Sciatic nerve (tissue), 2 donors: ENCODE measurements at regions of chr5 and their contacts with region 1.

Region 1: GRCh38 chr5:87069974-87070624 is 197.6 kb upstream of the RASA1 start:
- DNase-seq: no peak
- ATAC-seq: peak; percentile 44

Region 2: DNA sequence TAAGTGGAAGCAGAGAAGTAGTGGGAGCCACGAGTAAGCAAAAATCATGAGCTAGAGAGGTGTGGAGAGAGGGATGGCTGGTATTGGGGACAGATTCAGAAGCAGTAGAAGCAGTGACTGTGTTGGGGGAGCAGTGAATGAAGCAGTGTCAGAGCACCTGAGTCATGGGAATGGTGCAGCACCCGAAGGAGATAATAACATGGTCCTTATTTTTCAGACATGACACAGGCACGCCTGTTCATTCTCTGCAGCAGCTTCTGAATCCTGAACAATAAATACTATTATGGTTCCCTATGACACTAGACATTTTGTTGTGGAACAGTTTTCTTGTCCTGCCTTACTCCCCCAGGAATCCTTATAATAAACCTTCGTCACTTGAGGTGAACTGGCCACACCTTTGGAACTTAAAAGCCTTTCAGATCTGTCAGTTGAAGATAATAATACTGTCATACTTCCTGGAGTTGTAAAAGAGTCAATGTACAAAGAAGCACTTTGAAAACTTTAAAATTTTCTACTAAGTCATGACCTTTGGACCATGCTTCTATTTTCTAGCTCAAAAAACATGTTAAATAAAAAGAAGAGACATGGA is 190.6 kb after region 1 on chr5:
- intact Hi-C with region 1: loop called (anchors 5 kb)
- DNase-seq: no peak
- ATAC-seq: no peak

Region 3: GRCh38 chr5:88085462-88085861 is 1015.4 kb after region 1 on chr5:
- intact Hi-C with region 1: no loop called
- DNase-seq: no peak
- ATAC-seq: no peak